CD4-positive, alpha-beta T cell (primary cell): ENCODE measurements at regions of chr10 and their contacts with region 1.

Region 1: GRCh38 chr10:47261121-47261520 is 38.9 kb upstream of the GDF10 start:
- DNase-seq: peak in 13 of 14 experiments; percentile 18 to 73 (median 44)
- ATAC-seq: peak; percentile 61
- H3K4me3 ChIP-seq: no peak overlapping the region
- H3K4me3 Mint-ChIP-seq: peak overlapping the region; percentile 11
- H3K27ac ChIP-seq: peak overlapping the region; percentile 44 to 77
- H3K27ac Mint-ChIP-seq: peak overlapping the region; percentile 93
- H3K4me1 ChIP-seq: peaks cover 75% of the 10 kb centered on the region
- H3K4me1 Mint-ChIP-seq: peaks cover 96% of the 10 kb centered on the region
- H3K27me3 ChIP-seq: no peaks in the 10 kb centered on the region
- H3K27me3 Mint-ChIP-seq: no peaks in the 10 kb centered on the region
- CTCF ChIP-seq: no peak

Region 2: DNA sequence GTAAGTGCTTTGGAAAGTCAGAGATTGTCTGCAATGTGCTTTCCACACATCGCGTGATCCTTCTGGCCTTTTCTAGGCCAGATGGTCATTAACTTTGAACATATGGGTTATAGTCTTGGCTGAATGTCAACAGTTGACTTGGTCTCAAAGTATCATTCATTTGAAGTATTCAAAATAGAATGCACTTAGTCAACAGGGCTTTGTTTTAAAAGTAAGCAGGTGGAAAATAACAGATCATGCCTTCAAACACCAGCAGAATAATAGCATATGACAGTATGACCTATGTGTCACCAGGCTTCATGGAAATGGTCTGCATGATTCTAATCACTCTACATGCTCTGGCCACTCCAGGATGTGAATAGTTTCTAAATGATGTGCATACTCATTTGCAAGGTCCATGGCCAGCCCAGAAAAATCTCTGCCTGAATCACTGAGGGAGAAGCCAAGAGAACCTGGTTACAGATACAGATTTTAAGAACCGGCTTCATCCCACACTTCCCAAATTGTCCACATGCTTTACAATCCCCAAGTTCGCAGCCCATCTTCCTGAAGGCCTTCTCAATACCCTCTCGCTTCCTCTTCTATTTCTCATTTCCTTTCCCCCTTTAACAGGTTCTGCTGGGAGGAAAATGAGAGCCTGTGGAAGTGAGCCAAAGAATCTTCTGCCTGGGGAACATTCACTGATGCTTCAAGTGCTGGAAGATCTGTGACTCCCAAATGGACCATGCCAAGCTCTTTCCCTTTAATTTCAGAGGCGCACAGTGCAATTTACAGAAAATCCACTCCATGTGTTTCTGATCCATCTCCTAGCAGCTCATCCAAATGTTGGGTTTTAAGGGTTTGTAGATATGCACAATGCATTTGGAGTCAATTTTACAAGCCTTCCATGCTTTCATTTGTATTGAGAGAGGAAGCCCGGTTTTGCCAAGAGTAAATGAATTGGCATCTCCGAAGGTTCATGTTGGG is 83.9 kb before region 1 on chr10:
- CTCF ChIA-PET with region 1: no interaction called
- POLR2A ChIA-PET with region 1: no interaction called
- intact Hi-C with region 1: no loop called
- DNase-seq: no peak
- ATAC-seq: no peak
- H3K4me3 ChIP-seq: no peak overlapping the region
- H3K4me3 Mint-ChIP-seq: no peak overlapping the region
- H3K27ac ChIP-seq: no peak overlapping the region
- H3K27ac Mint-ChIP-seq: no peak overlapping the region
- H3K4me1 ChIP-seq: peaks cover 3% of the 10 kb centered on the region
- H3K4me1 Mint-ChIP-seq: peaks cover 4% of the 10 kb centered on the region
- H3K27me3 ChIP-seq: no peaks in the 10 kb centered on the region
- H3K27me3 Mint-ChIP-seq: no peaks in the 10 kb centered on the region
- CTCF ChIP-seq: no peak

Region 3: GRCh38 chr10:47207281-47207615 is 53.9 kb before region 1 on chr10:
- CTCF ChIA-PET with region 1: no interaction called
- POLR2A ChIA-PET with region 1: interaction called, 7 read pairs
- intact Hi-C with region 1: loop called (anchors 5 kb)
- DNase-seq: peak in 5 of 14 experiments; percentile 9 to 52 (median 42)
- ATAC-seq: peak; percentile 57
- H3K4me3 ChIP-seq: peak overlapping the region; percentile 28
- H3K4me3 Mint-ChIP-seq: peak overlapping the region; percentile 65
- H3K27ac ChIP-seq: peak overlapping the region; percentile 60 to 74
- H3K27ac Mint-ChIP-seq: peak overlapping the region; percentile 82
- H3K4me1 ChIP-seq: peaks cover 46% of the 10 kb centered on the region
- H3K4me1 Mint-ChIP-seq: peaks cover 70% of the 10 kb centered on the region
- H3K27me3 ChIP-seq: no peaks in the 10 kb centered on the region
- H3K27me3 Mint-ChIP-seq: no peaks in the 10 kb centered on the region
- CTCF ChIP-seq: no peak

Region 4: DNA sequence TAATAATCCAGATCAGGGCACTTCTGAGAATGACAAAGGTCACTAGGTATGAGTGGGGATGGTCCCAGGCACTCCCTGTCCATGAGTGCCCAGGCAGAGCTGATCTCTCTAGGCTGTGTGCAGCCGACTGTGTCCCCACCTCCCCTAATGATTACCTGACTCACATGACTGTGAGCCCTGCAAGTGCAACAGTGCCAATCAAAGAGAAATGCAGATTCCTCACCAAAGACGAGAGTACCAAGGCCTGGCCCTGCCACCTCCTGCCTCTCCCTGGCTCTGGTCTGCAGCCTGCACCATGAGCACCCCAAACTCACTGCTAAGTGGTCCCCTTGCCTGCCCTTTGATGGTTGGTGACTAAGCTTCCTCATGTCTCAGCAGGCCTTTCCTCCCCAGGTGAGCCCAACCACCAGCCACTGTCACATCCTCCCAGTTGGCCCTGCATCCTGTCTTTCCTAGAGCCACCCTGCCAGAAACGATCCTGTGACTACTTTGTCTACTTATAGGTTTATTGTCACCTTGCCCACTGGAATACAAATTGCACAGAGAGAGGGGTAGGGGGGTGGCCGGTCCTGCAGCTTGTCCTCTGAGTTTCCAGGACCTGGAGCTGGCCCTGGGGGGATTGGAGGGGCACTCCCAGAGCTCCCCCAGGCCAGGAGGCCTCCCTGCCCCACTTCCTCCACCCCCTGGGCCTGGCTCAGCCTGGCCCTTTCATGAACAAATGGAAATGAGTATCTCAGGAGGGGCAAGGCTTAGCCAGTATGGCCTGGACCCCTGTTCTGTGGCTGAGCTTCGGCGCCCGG is 16.4 kb after region 1 on chr10:
- CTCF ChIA-PET with region 1: no interaction called
- POLR2A ChIA-PET with region 1: interaction called, 13 read pairs
- intact Hi-C with region 1: no loop called
- DNase-seq: peak in 11 of 14 experiments; percentile 36 to 78 (median 46)
- ATAC-seq: peak; percentile 90
- H3K4me3 ChIP-seq: no peak overlapping the region
- H3K4me3 Mint-ChIP-seq: no peak overlapping the region
- H3K27ac ChIP-seq: no peak overlapping the region
- H3K27ac Mint-ChIP-seq: peak overlapping the region; percentile 13
- H3K4me1 ChIP-seq: peaks cover 32% of the 10 kb centered on the region
- H3K4me1 Mint-ChIP-seq: peaks cover 32% of the 10 kb centered on the region
- H3K27me3 ChIP-seq: no peaks in the 10 kb centered on the region
- H3K27me3 Mint-ChIP-seq: no peaks in the 10 kb centered on the region
- CTCF ChIP-seq: no peak

Region 5: GRCh38 chr10:47361293-47361692 is 100.2 kb after region 1 on chr10:
- CTCF ChIA-PET with region 1: no interaction called
- POLR2A ChIA-PET with region 1: no interaction called
- intact Hi-C with region 1: no loop called
- DNase-seq: peak in 2 of 14 experiments; percentile 15 to 23
- ATAC-seq: no peak
- H3K4me3 ChIP-seq: no peak overlapping the region
- H3K4me3 Mint-ChIP-seq: no peak overlapping the region
- H3K27ac ChIP-seq: no peak overlapping the region
- H3K27ac Mint-ChIP-seq: no peak overlapping the region
- H3K4me1 ChIP-seq: no peaks in the 10 kb centered on the region
- H3K4me1 Mint-ChIP-seq: no peaks in the 10 kb centered on the region
- H3K27me3 ChIP-seq: no peaks in the 10 kb centered on the region
- H3K27me3 Mint-ChIP-seq: no peaks in the 10 kb centered on the region
- CTCF ChIP-seq: no peak

Region 6: GRCh38 chr10:49242604-49243003 is 1981.5 kb after region 1 on chr10:
- CTCF ChIA-PET with region 1: no interaction called
- POLR2A ChIA-PET with region 1: no interaction called
- intact Hi-C with region 1: no loop called
- DNase-seq: no peak
- ATAC-seq: no peak
- H3K4me3 ChIP-seq: no peak overlapping the region
- H3K4me3 Mint-ChIP-seq: no peak overlapping the region
- H3K27ac ChIP-seq: no peak overlapping the region
- H3K27ac Mint-ChIP-seq: no peak overlapping the region
- H3K4me1 ChIP-seq: no peaks in the 10 kb centered on the region
- H3K4me1 Mint-ChIP-seq: no peaks in the 10 kb centered on the region
- H3K27me3 ChIP-seq: peaks cover 0 to 3% of the 10 kb centered on the region in 2 experiments
- H3K27me3 Mint-ChIP-seq: peaks cover 10% of the 10 kb centered on the region
- CTCF ChIP-seq: no peak